HEK293 (cell line): ENCODE measurements at regions of chr5 and their contacts with region 1.

Region 1: GRCh38 chr5:151051066-151051930 is 29.5 kb downstream of the TNIP1 start:
- H3K4me3 ChIP-seq: no peak overlapping the region
- H3K27ac ChIP-seq: no peak overlapping the region
- H3K4me1 ChIP-seq: no peaks in the 10 kb centered on the region
- CTCF ChIP-seq: peak; percentile 83; the same call in 1 of the 2 replicates

Region 2: DNA sequence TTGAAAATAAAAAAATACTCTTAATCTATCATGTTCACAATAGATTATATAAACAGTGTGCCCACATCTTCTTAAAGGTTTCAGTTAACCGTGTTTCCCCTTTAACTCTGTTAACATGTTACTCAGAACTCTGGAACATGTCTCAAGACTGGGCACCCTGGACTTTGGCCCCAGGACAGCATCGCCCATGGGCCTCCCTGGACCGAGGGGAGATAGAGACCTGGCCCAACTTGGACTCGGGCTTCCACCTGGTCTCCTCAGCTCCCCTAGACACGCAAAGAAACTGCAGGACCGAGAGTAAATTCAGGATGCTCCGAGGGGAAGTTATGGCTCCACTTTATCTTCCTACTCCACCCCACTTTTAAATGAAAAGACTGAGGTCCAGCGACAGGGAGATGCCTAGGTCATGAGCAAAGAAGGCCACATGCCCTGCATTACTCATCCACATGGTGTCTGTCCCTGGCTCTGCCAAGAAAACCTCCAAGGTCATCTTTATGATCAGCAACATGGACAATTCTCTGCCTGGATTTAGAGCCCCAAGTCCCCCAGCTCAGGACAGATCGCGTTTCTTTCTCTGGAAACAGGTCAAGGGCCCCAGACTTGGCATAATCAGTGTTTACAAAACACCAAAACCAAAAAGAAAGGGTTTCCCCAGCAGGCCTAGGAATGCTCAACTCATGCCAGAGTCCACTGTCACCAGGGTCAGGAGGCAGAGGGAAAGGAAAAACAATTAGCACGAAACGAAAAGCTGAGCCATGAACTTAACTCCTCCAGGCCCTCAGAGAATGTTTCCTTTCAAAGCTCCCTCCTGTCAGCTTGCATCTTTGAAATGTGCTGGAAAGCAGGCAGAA is 13.5 kb before region 1 on chr5:
- CTCF ChIA-PET with region 1: interaction called, 17 read pairs
- POLR2A ChIA-PET with region 1: no interaction called
- H3K4me3 ChIP-seq: no peak overlapping the region
- H3K27ac ChIP-seq: no peak overlapping the region
- H3K4me1 ChIP-seq: 0 out of 2 replicates have a peak, but pooled peaks cover 3% of the 10 kb centered on the region
- CTCF ChIP-seq: no peak

Region 3: GRCh38 chr5:151072627-151073029 is 21.3 kb after region 1 on chr5:
- CTCF ChIA-PET with region 1: interaction called, 11 read pairs
- POLR2A ChIA-PET with region 1: no interaction called
- H3K4me3 ChIP-seq: no peak overlapping the region
- H3K27ac ChIP-seq: no peak overlapping the region
- H3K4me1 ChIP-seq: no peaks in the 10 kb centered on the region
- CTCF ChIP-seq: no peak

Region 4: DNA sequence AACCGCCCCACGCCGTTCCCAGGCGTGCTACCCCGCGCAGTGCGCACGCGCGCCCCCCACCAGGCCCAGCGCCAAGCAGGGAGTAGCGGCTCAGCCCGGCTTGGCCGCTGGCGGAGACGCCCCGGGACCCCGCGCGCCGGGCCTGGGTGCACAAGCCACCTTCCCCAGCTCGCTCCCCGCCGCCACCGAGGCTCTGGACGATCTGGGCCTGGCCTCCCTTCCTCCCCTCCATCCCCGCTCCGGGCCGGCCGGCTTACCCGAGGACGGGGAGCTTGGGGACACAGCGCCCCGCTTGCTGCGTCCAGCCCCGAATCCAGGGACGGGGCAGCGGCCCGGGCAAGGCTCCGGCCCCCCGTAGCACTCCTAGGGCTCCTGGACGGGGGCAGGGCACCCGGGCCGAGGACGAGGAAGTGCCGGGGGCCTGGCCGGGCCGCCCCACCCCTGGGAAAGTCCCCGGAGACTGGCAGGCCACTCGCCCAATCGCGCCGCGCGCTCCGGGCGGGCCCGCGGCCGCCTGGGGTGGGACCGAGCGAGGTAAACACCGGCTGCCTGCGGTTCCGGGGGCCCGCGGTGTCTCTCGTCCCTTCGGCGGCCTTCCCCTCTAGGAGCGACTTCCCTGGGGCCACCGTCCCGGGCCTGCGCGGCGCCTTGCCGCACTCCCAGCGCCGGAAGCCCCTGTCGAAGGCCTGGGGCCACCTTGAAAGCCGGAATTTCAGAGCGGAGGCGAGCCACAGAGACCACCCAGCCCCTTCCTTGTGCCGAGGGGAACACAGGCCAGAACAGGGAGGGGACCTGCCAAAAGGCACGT is 29.5 kb after region 1 on chr5 and contains the start of gene TNIP1:
- CTCF ChIA-PET with region 1: interaction called, 18 read pairs
- POLR2A ChIA-PET with region 1: no interaction called
- H3K4me3 ChIP-seq: peak within 1 kb of the TSS; percentile 98
- H3K27ac ChIP-seq: peak within 1 kb of the TSS; percentile 96
- H3K4me1 ChIP-seq: peaks cover 6% of the 10 kb centered on the region; the same call in 1 of the 2 replicates
- CTCF ChIP-seq: peak; percentile 82

Region 5: DNA sequence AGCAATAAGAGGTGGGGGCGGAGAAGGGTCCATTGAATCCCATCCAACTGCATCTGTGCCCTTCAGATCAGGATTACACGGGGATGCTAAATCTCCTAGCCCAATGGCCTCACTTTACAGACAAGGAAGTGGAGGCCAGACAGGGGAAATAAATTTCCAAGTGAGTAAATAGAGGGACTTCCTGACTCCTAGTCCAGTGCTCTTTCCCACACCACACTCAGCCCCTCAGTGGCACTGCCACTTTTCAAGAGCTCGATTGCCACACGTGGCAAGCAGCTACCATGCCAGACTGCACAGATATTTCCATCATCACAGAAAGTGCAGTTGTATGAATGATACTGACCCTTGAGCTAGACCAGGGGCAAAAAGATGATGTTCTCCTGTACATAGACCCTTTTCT is 37.7 kb after region 1 on chr5:
- CTCF ChIA-PET with region 1: interaction called, 11 read pairs
- POLR2A ChIA-PET with region 1: no interaction called
- H3K4me3 ChIP-seq: no peak overlapping the region
- H3K27ac ChIP-seq: no peak overlapping the region
- H3K4me1 ChIP-seq: no peaks in the 10 kb centered on the region
- CTCF ChIP-seq: no peak

Region 6: DNA sequence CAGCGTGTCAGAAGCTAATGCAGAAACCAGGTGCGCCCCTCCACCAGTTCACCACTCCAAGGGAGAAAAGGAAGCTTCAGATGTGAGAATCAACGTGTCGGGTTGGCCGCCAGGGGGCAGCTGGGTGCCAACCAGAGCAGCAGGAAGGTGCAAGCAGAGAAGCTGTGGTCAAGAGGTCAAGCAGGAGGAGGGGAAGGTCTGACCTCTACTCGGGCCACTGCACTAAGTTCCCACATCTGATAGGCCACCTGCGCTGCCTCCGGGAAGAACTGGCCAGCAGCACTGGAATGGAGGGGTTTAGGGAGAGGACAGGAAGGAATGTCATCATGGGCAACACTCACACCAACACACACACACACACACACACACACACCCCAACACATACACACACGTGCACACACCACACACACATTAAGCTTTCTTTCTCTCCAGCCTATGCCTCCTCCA is 74.9 kb after region 1 on chr5:
- CTCF ChIA-PET with region 1: interaction called, 11 read pairs
- POLR2A ChIA-PET with region 1: no interaction called
- H3K4me3 ChIP-seq: no peak overlapping the region
- H3K27ac ChIP-seq: no peak overlapping the region
- H3K4me1 ChIP-seq: no peaks in the 10 kb centered on the region
- CTCF ChIP-seq: peak; percentile 83

Region 7: GRCh38 chr5:151239237-151239861 is 188.1 kb after region 1 on chr5:
- CTCF ChIA-PET with region 1: interaction called, 10 read pairs
- POLR2A ChIA-PET with region 1: no interaction called
- H3K4me3 ChIP-seq: no peak overlapping the region
- H3K27ac ChIP-seq: no peak overlapping the region
- H3K4me1 ChIP-seq: no peaks in the 10 kb centered on the region
- CTCF ChIP-seq: peak; percentile 61